IMR-90 (cell line): ENCODE measurements at regions of chr2 and their contacts with region 1.

Region 1: DNA sequence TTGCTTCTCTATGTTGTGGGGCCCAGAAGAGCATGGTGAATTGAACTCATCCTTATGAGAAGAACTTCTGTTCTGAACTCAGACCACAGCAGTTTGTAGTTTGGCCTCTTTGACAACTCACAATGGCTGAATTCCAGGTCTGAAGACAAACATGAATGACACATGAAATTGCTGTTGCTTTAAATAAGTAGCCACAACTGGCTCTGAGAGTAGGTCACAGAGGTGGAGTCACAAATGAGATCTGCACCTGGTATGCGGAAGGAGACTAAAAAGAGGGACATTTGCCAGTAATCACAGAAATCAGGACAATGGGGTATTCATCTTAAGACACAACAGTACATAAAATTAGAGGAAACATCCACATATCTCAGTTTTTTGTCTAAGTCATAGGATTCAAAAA is 290.3 kb upstream of the MMADHC start:
- DNase-seq: peak; percentile 41
- ATAC-seq: no peak
- H3K4me3 ChIP-seq: no peak overlapping the region
- H3K27ac ChIP-seq: no peak overlapping the region
- H3K4me1 ChIP-seq: no peaks in the 10 kb centered on the region; the same call in 1 of the 2 replicates
- H3K27me3 ChIP-seq: no peaks in the 10 kb centered on the region
- CTCF ChIP-seq: no peak
- POLR2A ChIP-seq: no peak
- RAD21 ChIP-seq: no peak

Region 2: DNA sequence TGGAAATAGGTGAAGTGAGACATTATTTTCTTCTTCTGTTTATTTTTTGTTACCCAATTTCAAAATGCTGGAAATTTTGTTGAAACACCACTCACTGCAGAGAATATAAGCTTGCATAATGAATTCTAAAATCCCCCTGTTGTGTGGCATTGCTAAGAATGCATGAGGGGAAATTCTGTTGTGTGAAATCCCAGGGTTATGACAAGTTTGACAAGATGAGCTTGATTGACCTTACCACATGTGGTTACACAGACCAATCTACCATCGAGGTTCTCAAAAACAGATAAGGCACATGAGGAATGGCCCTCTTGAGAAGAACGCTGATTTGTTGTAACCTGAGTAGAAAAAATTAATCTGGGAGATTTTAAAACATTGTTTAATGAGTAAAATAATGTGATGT is 28.8 kb before region 1 on chr2:
- CTCF ChIA-PET with region 1: no interaction called
- POLR2A ChIA-PET with region 1: no interaction called
- dilution Hi-C with region 1: no loop called
- in situ Hi-C with region 1: no loop called
- intact Hi-C with region 1: no loop called
- DNase-seq: no peak
- ATAC-seq: no peak
- H3K4me3 ChIP-seq: no peak overlapping the region
- H3K27ac ChIP-seq: no peak overlapping the region
- H3K4me1 ChIP-seq: peaks cover 2% of the 10 kb centered on the region
- H3K27me3 ChIP-seq: no peaks in the 10 kb centered on the region
- CTCF ChIP-seq: no peak
- POLR2A ChIP-seq: no peak
- RAD21 ChIP-seq: no peak

Region 3: DNA sequence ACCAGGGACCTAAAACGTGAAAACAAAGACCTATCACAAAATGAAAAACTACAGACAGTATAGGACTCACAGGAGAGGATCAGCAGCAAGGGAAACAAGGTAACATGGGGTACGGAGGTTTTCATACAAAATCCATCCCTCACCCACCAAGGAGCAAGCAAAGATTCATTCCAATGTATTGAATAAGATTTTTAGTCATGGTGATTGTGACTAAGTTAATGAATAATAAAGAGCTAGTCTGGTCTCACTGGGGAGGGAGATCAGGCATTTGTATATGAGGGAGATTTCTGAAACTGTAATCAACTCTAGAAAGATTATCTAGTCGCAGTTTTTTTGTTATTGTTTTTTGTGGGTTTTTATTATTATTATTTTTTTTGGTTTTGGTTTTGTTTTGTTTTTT is 46.1 kb after region 1 on chr2:
- CTCF ChIA-PET with region 1: no interaction called
- POLR2A ChIA-PET with region 1: no interaction called
- dilution Hi-C with region 1: no loop called
- in situ Hi-C with region 1: no loop called
- intact Hi-C with region 1: loop called (anchors 5 kb)
- DNase-seq: peak; percentile 62
- ATAC-seq: peak; percentile 75
- H3K4me3 ChIP-seq: no peak overlapping the region
- H3K27ac ChIP-seq: no peak overlapping the region
- H3K4me1 ChIP-seq: peaks cover 5% of the 10 kb centered on the region; the same call in 1 of the 2 replicates
- H3K27me3 ChIP-seq: no peaks in the 10 kb centered on the region
- CTCF ChIP-seq: no peak
- POLR2A ChIP-seq: no peak
- RAD21 ChIP-seq: no peak